Psoas muscle (tissue), 8 donors: ENCODE measurements at regions of chr13 and their contacts with region 1.

Region 1: DNA sequence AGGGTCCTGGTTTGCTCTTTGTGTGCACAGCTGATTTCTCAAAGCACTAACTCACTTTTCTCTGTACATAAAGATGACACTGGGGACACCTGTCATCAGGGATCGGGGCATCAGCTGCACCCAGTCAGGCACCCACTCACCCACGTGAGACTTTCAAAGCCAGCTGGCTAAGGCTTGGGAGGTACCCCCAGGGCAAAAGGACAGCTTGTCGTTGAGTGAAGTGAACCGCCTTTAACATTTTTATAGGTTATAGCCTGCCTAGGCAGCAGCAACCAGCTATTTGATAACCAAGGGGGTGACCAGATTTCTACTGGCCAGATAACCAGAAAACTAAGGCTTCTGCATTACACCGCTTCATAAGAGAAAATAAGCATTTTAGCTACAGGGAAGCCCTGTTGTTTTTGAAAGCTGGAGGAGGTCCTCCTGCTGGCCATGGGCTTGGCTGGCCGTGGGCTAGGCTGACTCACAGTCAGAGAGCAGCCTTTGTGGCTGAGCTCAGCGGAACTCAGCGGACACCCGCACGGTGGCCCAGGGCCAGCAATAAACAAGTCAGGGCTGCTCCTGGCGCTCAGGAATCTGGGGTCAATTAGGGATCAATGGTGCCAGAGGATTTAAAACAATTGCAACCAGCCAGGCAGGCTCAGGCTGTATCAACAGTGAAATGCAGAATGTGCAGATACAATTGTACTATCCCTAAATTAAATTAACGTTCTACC is 57.1 kb downstream of the ALOX5AP start:
- DNase-seq: peak; percentile 83 to 88
- ATAC-seq: peak; percentile 88 to 91 (median 90)
- H3K4me3 ChIP-seq: no peak overlapping the region
- H3K27ac ChIP-seq: no peak overlapping the region
- H3K4me1 ChIP-seq: peaks cover 10% of the 10 kb centered on the region
- H3K27me3 ChIP-seq: no peaks in the 10 kb centered on the region
- CTCF ChIP-seq: peak; percentile 26

Region 2: DNA sequence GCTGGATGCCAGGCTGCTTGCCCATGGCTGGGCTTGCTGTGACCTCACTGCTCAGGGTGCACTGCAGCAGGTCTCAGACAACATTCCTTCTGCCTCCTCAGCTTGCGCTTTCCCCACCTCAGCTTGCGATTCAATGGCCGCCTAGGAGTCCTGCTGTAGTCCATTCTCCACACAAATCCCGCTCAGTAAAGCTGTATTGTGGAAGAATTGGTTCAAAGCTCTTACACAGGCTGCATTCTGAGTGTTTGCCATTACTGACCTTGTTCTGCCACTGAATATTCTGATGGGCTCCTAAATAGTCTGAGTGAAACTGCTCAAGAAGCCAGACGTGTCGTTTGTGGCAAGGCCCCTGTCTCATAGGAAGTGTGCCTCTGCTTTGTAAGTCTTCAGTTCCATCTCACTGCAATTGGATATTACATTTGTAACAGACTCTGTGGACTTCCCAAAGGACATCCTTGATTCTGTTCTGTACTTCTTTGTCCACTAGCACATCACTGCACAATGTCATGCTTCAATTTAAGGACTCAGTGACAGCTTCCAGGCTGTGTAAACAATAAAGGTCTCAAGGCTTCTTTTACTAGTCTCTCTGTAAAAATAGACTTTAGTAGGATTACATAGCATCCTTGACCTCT is 534.9 kb before region 1 on chr13:
- intact Hi-C with region 1: loop called in 1 of 2 experiments (anchors 10 kb)
- DNase-seq: no peak
- ATAC-seq: no peak
- H3K4me3 ChIP-seq: no peak overlapping the region
- H3K27ac ChIP-seq: no peak overlapping the region
- H3K4me1 ChIP-seq: no peaks in the 10 kb centered on the region
- H3K27me3 ChIP-seq: no peaks in the 10 kb centered on the region
- CTCF ChIP-seq: no peak

Region 3: DNA sequence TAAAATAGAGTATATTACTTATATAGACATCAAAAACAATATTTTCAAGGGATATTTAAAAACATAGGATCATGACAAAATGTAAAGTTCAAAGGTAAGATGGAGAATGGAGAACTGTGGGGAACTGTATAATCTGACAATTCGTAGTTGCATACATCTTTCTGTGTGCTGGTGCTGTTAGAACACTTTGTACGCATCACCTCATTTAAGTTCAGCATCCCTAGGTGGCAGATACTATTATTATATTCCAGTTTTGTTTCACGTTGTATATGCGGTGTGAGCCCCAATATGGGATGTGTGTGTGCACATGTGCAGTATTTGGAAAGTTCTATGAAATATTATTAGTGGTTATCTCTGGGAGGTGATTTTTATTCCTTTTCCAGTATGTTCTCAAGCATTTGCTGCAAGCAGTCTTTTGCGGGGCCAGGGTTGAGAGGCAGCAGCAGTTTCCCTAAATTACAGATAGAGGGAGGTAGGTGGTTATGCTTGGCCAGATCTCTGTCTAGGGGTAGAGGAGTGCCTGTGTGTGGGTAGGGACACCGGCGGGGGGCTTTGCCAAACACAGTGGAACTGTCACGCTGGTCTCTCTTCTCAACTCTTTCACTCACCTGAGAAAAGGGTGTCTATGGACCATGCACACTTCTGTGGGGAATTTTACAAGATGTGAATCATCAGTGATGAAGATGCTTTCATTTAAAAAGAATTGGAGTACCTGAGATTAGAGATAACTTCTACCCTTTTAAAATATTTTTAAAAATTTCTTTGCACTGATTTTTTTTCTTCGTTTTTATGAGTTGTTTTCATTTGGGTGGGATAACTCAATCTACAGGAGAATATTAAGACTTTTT is 112.7 kb before region 1 on chr13:
- intact Hi-C with region 1: loop called in 1 of 2 experiments (anchors 5 kb)
- DNase-seq: no peak
- ATAC-seq: peak in 3 of 4 donors; percentile 61 to 78 (median 74)
- H3K4me3 ChIP-seq: no peak overlapping the region
- H3K27ac ChIP-seq: no peak overlapping the region
- H3K4me1 ChIP-seq: no peaks in the 10 kb centered on the region
- H3K27me3 ChIP-seq: no peaks in the 10 kb centered on the region
- CTCF ChIP-seq: peak; percentile 43

Region 4: DNA sequence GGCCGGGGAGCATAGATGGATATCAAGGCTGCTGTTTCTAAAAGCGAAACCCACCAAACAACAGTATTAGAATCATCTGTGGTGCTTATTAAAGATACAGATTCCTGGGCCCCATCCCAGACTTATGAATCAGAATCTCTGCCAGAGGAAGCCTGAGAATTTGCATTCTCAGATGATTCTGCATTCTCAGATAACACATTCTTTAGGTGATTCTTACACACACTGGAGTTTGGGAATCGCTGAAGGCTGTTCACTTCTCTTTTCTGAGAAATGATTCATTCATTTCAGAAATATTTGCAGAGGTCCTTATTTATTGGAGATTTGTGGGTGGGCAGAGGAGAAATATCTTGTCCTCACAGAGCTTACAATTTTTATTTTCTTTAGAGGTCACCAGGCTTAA is 32.7 kb before region 1 on chr13:
- intact Hi-C with region 1: loop called (anchors 5 kb)
- DNase-seq: no peak
- ATAC-seq: no peak
- H3K4me3 ChIP-seq: no peak overlapping the region
- H3K27ac ChIP-seq: no peak overlapping the region
- H3K4me1 ChIP-seq: peaks cover 6% of the 10 kb centered on the region
- H3K27me3 ChIP-seq: no peaks in the 10 kb centered on the region
- CTCF ChIP-seq: no peak

Region 5: GRCh38 chr13:30832845-30833332 is 40.4 kb after region 1 on chr13:
- intact Hi-C with region 1: no loop called
- DNase-seq: peak; percentile 51 to 64
- ATAC-seq: peak in 3 of 4 donors; percentile 32 to 51 (median 39)
- H3K4me3 ChIP-seq: no peak overlapping the region
- H3K27ac ChIP-seq: no peak overlapping the region
- H3K4me1 ChIP-seq: no peaks in the 10 kb centered on the region
- H3K27me3 ChIP-seq: no peaks in the 10 kb centered on the region
- CTCF ChIP-seq: no peak